K562 (cell line): ENCODE measurements at regions of chr3 and their contacts with region 1.

Region 1: GRCh38 chr3:45693941-45694521 is 4.8 kb downstream of the SACM1L start:
- DNase-seq: peak in 1 of 4 experiments; percentile 27
- ATAC-seq: peak; percentile 13; the same call in 2 of the 3 replicates
- H3K4me3 ChIP-seq: no peak overlapping the region
- H3K27ac ChIP-seq: peak overlapping the region; percentile 4; the same call in 1 of the 3 replicates
- H3K4me1 ChIP-seq: peaks cover 8 to 22% of the 10 kb centered on the region in 2 experiments; a peak in 3 of 5 replicates
- H3K27me3 ChIP-seq: no peaks in the 10 kb centered on the region
- CTCF ChIP-seq: no peak
- EP300 ChIP-seq: no peak
- POLR2A ChIP-seq: no peak
- RAD21 ChIP-seq: no peak

Region 2: DNA sequence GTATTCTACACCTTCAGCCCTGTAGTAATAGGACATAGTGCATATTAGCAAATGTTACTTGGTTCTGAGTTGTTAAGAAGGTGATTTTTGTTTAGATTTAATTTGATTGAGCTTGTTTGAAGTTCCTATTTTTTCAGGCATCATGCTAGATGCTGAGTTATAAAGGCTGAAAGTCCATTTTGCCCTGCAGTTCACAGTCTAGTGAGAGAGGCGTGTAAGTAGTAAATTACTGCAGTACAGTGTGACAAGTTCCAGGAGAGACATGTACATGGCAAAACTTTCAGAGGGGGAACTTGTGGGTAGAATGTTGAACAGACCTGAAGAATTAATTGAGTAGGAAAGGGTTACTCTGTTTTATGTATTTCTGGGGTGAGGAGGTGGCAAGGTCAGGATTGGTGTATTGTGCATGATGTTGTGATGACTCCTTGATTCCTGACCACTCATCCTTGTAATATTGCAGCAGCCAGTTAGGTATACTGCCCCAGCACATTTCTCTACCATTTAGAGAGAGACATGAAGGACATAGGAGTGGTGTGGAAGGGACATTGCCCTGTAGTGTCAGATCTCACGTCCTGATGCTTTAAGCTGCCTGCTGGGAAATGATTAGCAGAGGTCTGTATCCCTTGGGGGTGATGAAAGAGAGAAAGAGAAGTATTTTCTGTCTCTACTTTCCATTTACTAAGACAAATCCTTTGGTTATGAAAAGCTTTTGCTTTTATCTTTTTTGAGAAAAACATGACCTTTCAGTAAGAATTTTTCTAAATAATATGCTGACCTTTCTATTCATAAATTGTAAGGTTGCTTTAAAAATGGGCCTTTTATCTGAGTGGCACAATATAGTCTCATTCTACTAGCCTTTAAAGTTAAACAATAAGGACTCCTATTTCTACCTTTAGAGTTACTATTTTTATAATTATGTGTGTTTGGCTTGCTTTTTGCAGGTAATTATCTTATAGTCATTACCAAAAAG is 12.1 kb after region 1 on chr3:
- CTCF ChIA-PET with region 1: no interaction called
- POLR2A ChIA-PET with region 1: interaction called, 15 read pairs
- in situ Hi-C with region 1: no loop called
- intact Hi-C with region 1: no loop called
- DNase-seq: no peak
- ATAC-seq: no peak
- H3K4me3 ChIP-seq: no peak overlapping the region
- H3K27ac ChIP-seq: no peak overlapping the region
- H3K4me1 ChIP-seq: no peaks in the 10 kb centered on the region
- H3K27me3 ChIP-seq: no peaks in the 10 kb centered on the region
- CTCF ChIP-seq: no peak
- EP300 ChIP-seq: no peak
- POLR2A ChIP-seq: no peak
- RAD21 ChIP-seq: no peak